ENCODE measurements at regions of chr22 and their contacts with region 1.

Region 1: DNA sequence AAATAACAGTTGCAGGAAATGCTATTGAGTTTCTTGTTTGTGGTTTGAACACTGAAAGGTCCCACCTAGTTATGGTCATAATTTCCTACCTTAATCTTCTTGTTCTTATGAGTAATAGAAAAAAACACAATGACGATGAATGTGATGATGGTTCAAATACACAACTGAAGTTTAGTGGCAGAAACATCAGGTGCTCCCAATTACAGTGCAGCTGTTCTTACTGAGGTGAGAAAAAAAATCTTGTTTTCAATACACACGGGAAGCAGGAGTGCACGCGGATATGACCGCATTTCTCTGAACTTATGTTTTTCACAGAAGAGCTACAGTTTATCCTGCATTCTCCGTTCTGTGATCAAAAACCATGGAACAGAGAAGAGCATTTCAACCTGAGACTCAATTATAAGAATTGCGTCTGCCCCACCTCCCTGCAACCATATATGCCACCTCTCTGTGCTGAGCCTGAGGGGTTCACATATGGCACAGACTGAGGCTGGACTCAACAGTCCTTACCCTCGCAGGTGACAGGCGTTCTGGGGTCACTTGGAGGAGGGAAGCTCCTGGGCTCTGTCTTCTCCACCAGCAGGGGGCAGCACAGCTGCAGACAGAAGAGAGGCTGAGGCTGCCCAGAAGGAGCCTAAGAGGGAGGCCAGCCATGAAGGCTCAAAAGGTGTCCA is 99.7 kb upstream of the IGLL5 start:
- DNase-seq: peak; percentile 33 to 72 (median 61)
- ATAC-seq: peak; percentile 82
- H3K4me3 ChIP-seq: no peak overlapping the region
- H3K4me3 Mint-ChIP-seq: peak overlapping the region in 1 of 10 donors; percentile 44
- H3K27ac ChIP-seq: no peak overlapping the region
- H3K27ac Mint-ChIP-seq: peak overlapping the region in 4 of 9 donors; percentile 8 to 48 (median 26)
- H3K4me1 ChIP-seq: peaks cover 10 to 56% of the 10 kb centered on the region in 2 donors
- H3K4me1 Mint-ChIP-seq: peaks cover 12 to 44% (median 26%) of the 10 kb centered on the region in 7 donors
- H3K27me3 ChIP-seq: no peaks in the 10 kb centered on the region
- H3K27me3 Mint-ChIP-seq: peaks cover 0 to 13% (median 0%) of the 10 kb centered on the region in 5 donors

Region 2: DNA sequence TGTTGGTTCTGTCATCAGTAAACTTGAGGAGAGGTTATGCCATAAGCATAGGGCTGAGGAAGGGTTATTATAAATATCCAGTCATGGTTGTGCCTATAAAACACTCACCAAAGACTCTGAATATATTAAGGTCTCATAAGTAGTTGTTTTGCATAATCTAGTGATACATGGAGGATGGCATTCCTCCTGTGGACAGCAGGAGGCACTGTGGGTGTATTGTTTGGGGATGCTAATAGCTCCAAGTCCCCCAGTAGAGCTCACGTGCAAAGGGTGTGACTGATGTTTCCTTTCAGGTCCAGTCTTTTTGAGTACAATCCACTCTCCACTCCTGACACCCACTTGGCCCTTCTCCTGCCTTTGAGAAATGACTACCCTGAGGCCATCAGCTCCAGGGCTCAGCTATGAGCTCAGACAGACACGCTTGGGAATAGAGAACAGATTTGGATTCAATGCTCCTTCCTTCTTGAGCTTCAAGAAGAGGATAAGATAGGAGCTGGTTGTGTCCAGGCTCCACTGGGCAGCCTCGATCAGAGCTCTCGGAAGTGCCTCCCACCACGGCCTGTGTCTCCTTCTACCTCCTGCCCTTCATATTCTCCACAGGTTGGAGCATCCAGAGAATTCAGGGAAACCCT is 14.5 kb after region 1 on chr22:
- CTCF ChIA-PET with region 1: interaction called, 29 read pairs
- POLR2A ChIA-PET with region 1: interaction called, 5 read pairs
- intact Hi-C with region 1: no loop called
- DNase-seq: peak in 5 of 9 donors; percentile 26 to 53 (median 34)
- ATAC-seq: peak; percentile 79
- H3K4me3 ChIP-seq: no peak overlapping the region
- H3K4me3 Mint-ChIP-seq: no peak overlapping the region
- H3K27ac ChIP-seq: no peak overlapping the region
- H3K27ac Mint-ChIP-seq: peak overlapping the region in 1 of 9 donors; percentile 10
- H3K4me1 ChIP-seq: peaks cover 0 to 41% of the 10 kb centered on the region in 2 donors
- H3K4me1 Mint-ChIP-seq: peaks cover 0 to 29% (median 16%) of the 10 kb centered on the region in 7 donors
- H3K27me3 ChIP-seq: no peaks in the 10 kb centered on the region
- H3K27me3 Mint-ChIP-seq: peaks cover 0 to 51% (median 0%) of the 10 kb centered on the region in 5 donors

Region 3: GRCh38 chr22:22942511-22943329 is 154.8 kb after region 1 on chr22:
- CTCF ChIA-PET with region 1: no interaction called
- POLR2A ChIA-PET with region 1: no interaction called
- intact Hi-C with region 1: loop called in 1 of 2 experiments (anchors 1 kb)
- DNase-seq: peak; percentile 31 to 66 (median 53)
- ATAC-seq: peak; percentile 89
- H3K4me3 ChIP-seq: no peak overlapping the region
- H3K4me3 Mint-ChIP-seq: peak overlapping the region in 1 of 10 donors; percentile 0
- H3K27ac ChIP-seq: no peak overlapping the region
- H3K27ac Mint-ChIP-seq: peak overlapping the region in 5 of 9 donors; percentile 0 to 44 (median 28)
- H3K4me1 ChIP-seq: no peaks in the 10 kb centered on the region
- H3K4me1 Mint-ChIP-seq: peaks cover 4 to 9% (median 5%) of the 10 kb centered on the region in 7 donors
- H3K27me3 ChIP-seq: no peaks in the 10 kb centered on the region
- H3K27me3 Mint-ChIP-seq: peaks cover 0 to 21% (median 0%) of the 10 kb centered on the region in 5 donors

Measured in naive thymus-derived CD4-positive, alpha-beta T cell (primary cell).